ENCODE measurements at regions of chr17 and their contacts with region 1.

Region 1: GRCh38 chr17:17476865-17477467 is at the start of gene MED9:
- DNase-seq: peak; percentile 90 to 98 (median 94)
- ATAC-seq: peak; percentile 100
- H3K4me3 ChIP-seq: peak within 1 kb of the TSS; percentile 98
- H3K4me3 Mint-ChIP-seq: peak within 1 kb of the TSS; percentile 85 to 92 (median 92)
- H3K27ac ChIP-seq: peak within 1 kb of the TSS; percentile 87
- H3K27ac Mint-ChIP-seq: peak within 1 kb of the TSS; percentile 72 to 95 (median 92)
- H3K4me1 ChIP-seq: peaks cover 10 to 29% of the 10 kb centered on the region in 2 donors
- H3K4me1 Mint-ChIP-seq: peaks cover 20 to 58% (median 49%) of the 10 kb centered on the region in 7 donors
- H3K27me3 ChIP-seq: no peaks in the 10 kb centered on the region
- H3K27me3 Mint-ChIP-seq: peaks cover 0 to 11% (median 0%) of the 10 kb centered on the region in 5 donors
- total RNA-seq, gene MED9: 14.0 to 24.1 (median 17.2) TPM

Region 2: DNA sequence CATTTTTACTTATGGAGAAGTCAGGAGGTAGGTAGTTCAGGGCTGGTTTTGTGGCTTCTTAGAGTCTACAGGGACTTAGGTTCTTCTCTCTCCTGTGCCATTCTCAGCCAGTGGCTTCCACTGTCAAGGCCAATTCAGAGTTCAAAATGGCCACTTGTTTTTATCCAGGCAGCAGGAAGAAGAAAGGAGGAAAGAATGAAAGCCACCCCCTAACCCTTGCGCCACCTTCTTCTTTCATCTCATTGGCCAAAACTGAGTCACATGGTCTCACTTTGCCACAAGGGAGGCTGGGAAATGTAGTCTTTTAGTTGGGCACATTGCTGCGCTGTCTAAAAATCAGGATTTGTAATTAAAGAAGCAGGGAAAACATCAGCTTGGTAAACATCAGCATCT is 61.0 kb before region 1 on chr17:
- CTCF ChIA-PET with region 1: no interaction called
- POLR2A ChIA-PET with region 1: no interaction called
- intact Hi-C with region 1: loop called in 1 of 2 experiments (anchors 1 kb)
- DNase-seq: peak in 6 of 9 donors; percentile 19 to 48 (median 30)
- ATAC-seq: peak; percentile 70
- H3K4me3 ChIP-seq: no peak overlapping the region
- H3K4me3 Mint-ChIP-seq: peak overlapping the region in 1 of 10 donors; percentile 46
- H3K27ac ChIP-seq: no peak overlapping the region
- H3K27ac Mint-ChIP-seq: peak overlapping the region in 8 of 9 donors; percentile 17 to 77 (median 41)
- H3K4me1 ChIP-seq: peaks cover 0 to 9% of the 10 kb centered on the region in 2 donors
- H3K4me1 Mint-ChIP-seq: peaks cover 10 to 28% (median 22%) of the 10 kb centered on the region in 7 donors
- H3K27me3 ChIP-seq: no peaks in the 10 kb centered on the region
- H3K27me3 Mint-ChIP-seq: peaks cover 0 to 5% (median 0%) of the 10 kb centered on the region in 5 donors

Region 3: DNA sequence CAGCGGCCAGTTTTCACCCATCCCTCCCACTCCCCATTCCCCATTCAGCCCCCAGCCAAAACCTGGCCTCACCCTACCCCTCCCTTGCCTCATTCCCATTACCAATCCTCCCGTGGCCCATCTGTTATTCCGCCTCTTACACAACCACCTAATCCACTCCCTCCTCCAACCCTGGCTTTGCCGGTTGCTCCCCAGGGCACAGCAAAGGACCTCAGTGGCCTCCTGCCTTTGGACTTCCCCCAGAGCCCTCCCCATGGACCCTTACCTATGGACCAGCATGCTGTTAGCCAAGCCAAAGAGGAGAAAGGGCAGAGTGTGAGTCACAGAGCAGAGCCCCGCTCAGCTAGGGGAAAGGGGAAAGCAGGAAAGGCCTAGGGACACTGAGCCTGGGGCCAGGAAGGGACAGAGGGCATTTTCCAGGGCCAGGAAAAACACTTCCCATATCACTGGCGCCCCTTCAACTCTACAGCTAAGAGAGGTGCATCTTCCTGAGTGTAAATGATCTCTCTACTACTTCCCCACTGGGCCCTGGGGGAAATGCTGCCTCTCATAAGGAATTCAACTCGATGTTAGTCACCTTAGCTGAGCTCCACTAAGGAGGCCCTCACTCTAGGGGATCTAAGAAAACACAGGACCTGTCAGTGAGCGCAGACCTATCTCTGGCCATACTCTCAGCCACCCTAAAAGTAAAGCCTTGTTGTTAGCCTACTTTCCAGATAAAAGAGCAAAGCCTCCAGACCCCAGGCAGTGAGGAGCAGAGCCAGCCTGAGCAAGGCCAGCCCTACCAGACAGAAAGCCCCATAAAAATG is 103.9 kb after region 1 on chr17:
- CTCF ChIA-PET with region 1: no interaction called
- POLR2A ChIA-PET with region 1: no interaction called
- intact Hi-C with region 1: no loop called
- DNase-seq: no peak
- ATAC-seq: no peak
- H3K4me3 ChIP-seq: no peak overlapping the region
- H3K4me3 Mint-ChIP-seq: no peak overlapping the region
- H3K27ac ChIP-seq: no peak overlapping the region
- H3K27ac Mint-ChIP-seq: peak overlapping the region in 1 of 9 donors; percentile 51
- H3K4me1 ChIP-seq: no peaks in the 10 kb centered on the region
- H3K4me1 Mint-ChIP-seq: no peaks in the 10 kb centered on the region
- H3K27me3 ChIP-seq: no peaks in the 10 kb centered on the region
- H3K27me3 Mint-ChIP-seq: no peaks in the 10 kb centered on the region

Region 4: DNA sequence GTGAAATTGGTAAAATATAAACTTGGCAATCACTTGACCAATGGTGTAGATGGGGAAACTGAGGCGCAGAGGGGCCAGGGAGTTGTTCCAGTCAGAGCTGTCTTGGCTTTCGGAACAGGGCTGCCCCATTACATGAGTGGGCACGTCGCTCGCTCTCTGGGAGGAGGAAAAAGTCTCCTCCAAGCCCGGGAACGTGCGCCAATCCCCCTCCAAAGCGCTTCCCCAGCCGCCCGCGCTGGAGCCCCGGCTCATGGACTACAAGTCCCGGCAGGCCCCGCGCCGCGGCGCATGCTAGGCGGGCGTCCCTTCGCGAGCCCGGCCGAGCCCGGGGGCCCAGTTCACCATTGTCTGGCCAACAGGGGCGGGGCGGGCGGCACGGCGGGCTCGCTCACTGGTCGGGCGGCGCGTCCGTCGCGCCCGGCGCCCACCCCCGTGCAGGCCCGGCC is 748.2 kb after region 1 on chr17:
- CTCF ChIA-PET with region 1: no interaction called
- POLR2A ChIA-PET with region 1: no interaction called
- intact Hi-C with region 1: loop called in 1 of 2 experiments (anchors 2 kb)
- DNase-seq: peak; percentile 92 to 98 (median 94)
- ATAC-seq: peak; percentile 99
- H3K4me3 ChIP-seq: peak overlapping the region; percentile 46
- H3K4me3 Mint-ChIP-seq: peak overlapping the region; percentile 54 to 94 (median 68)
- H3K27ac ChIP-seq: peak overlapping the region; percentile 34
- H3K27ac Mint-ChIP-seq: peak overlapping the region in 4 of 9 donors; percentile 64 to 80 (median 77)
- H3K4me1 ChIP-seq: peaks cover 7 to 13% of the 10 kb centered on the region in 2 donors
- H3K4me1 Mint-ChIP-seq: peaks cover 24 to 30% (median 27%) of the 10 kb centered on the region in 7 donors
- H3K27me3 ChIP-seq: no peaks in the 10 kb centered on the region
- H3K27me3 Mint-ChIP-seq: no peaks in the 10 kb centered on the region